ENCODE measurements at regions of chr1 and their contacts with region 1.

Region 1: DNA sequence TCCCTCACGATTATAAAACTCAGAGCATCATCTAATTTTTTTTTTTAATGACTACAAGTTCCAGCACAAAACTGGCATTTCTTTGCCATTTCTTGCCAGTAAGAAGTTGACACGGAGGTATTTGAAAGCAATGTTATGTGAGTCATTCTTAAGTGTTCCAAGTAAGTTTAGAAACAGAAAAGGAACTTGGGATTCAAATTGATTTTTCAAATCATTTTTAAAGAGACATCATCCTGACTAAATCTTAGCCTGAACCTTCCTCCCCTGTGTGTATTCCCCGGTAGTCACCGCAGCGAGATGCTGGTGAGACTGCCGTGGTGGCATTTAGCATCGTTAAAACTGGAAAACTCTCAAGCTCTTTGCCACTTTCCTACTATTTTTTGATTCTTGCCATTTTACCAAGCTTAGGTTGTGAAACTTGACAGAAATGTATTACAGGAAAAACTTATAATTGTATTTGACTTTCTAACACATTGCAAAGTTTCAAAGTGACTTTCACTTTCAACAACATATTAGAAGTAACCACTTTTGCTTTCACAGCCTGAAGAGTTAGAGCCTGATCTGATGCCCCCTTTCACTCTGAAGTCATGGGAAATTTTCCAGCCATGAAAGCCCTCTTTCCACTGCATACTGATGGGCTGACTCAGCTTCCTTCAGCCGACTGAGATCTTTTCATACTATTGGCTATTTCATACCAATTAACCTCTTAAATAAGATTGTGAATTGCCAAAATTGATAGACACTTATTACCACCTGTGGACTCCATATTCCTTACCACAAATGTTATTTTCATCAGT is 61.4 kb downstream of the OLFML2B start:
- DNase-seq: peak; percentile 67
- H3K4me3 Mint-ChIP-seq: peak overlapping the region; percentile 73
- H3K27ac Mint-ChIP-seq: peak overlapping the region; percentile 90
- H3K4me1 Mint-ChIP-seq: peaks cover 52% of the 10 kb centered on the region
- H3K27me3 Mint-ChIP-seq: no peaks in the 10 kb centered on the region

Region 2: DNA sequence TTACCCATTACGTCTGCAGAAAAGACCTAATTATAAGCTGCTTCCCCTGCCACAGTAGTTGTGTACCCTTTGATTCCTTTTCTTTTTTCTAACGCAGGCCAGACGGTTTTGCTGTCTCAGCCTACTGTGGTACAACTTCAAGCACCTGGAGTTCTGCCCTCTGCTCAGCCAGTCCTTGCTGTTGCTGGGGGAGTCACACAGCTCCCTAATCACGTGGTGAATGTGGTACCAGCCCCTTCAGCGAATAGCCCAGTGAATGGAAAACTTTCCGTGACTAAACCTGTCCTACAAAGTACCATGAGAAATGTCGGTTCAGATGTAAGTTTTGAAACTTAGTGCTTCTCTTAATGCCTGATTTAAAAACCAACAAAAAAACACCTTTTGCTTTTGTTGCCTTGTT is 160.3 kb before region 1 on chr1:
- CTCF ChIA-PET with region 1: no interaction called
- POLR2A ChIA-PET with region 1: no interaction called
- intact Hi-C with region 1: no loop called
- DNase-seq: no peak
- H3K4me3 Mint-ChIP-seq: no peak overlapping the region
- H3K27ac Mint-ChIP-seq: no peak overlapping the region
- H3K4me1 Mint-ChIP-seq: peaks cover 25% of the 10 kb centered on the region
- H3K27me3 Mint-ChIP-seq: no peaks in the 10 kb centered on the region

Region 3: DNA sequence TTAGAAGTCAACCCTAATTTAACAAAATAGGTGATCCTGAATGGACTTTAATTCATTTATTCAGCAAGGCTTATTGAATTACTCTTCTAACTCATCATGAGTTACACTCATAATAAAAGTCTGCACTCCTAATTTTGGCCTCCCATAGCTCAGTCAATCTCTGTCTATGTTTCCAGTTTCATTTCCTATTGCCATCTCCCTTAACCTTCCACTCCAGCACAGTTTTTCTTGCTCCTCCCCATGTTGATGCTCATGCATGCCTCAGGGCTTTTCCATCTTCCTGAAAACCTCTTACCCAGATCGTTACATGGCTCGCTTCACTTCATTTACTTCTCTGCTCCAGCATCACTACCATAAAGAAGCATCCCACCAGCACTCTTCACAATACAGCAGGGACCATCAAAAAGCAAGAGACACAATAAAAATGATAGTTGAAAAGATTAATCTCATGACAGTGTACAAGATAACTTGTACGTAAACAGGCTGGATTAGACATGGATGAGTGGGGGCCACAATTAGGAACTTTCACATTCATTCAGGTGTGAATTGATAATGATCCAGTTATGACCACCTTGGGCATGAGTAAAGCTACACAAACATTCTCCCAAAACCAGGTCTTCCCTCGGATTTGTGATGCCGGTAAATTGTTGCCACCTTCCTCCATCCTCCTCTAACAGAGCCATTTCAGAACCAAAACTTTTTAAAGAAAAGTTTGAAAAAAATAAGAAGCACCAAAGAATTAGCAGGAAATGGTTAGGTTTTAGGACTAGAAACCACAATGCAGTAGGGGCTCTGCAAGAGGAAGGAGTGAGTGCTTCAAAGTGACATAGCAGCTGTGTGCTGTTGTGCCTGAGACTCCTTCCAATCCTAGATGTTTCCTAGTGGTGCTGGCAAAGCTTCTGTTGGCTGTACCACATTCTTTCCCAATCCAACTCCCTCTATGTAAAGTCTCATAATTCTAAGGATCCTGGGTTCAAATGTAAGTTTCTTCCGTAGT is 28.4 kb before region 1 on chr1:
- CTCF ChIA-PET with region 1: no interaction called
- POLR2A ChIA-PET with region 1: no interaction called
- intact Hi-C with region 1: loop called (anchors 1 kb)
- DNase-seq: no peak
- H3K4me3 Mint-ChIP-seq: no peak overlapping the region
- H3K27ac Mint-ChIP-seq: peak overlapping the region; percentile 69
- H3K4me1 Mint-ChIP-seq: peaks cover 35% of the 10 kb centered on the region
- H3K27me3 Mint-ChIP-seq: no peaks in the 10 kb centered on the region

Measured in activated CD4-positive, alpha-beta memory T cell treated with anti-CD3 and anti-CD28 coated beads for 36 hours (primary cell).